Calu3 (cell line): ENCODE measurements at regions of chr3 and their contacts with region 1.

Region 1: GRCh38 chr3:11099306-11099705 is 55.0 kb upstream of the HRH1 start:
- DNase-seq: no peak
- H3K4me3 Mint-ChIP-seq: no peak overlapping the region
- H3K27ac Mint-ChIP-seq: no peak overlapping the region
- H3K4me1 Mint-ChIP-seq: peaks cover 7% of the 10 kb centered on the region
- H3K27me3 Mint-ChIP-seq: no peaks in the 10 kb centered on the region
- CTCF ChIP-seq: no peak

Region 2: DNA sequence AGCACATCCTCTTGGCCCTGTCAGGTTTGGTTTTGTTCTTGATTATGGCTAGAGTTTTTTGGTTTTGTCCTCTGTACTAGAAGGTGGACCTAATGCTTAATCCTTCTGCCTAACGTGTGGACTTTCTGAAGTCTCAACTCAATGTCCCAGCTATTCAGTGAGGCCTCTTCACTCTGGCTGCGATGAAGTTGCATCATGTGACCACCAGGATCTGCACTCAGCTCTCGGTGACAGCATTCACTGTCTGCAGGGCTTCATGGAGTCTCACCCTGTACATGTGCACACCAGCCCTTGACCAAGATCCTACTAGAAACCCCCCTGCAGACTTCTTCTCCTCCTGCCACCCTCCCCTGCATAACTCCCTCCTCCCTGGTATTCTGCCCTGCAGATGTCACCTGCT is 16.2 kb after region 1 on chr3:
- CTCF ChIA-PET with region 1: interaction called, 10 read pairs
- intact Hi-C with region 1: no loop called
- DNase-seq: no peak
- H3K4me3 Mint-ChIP-seq: no peak overlapping the region
- H3K27ac Mint-ChIP-seq: no peak overlapping the region
- H3K4me1 Mint-ChIP-seq: peaks cover 11% of the 10 kb centered on the region
- H3K27me3 Mint-ChIP-seq: peaks cover 51% of the 10 kb centered on the region
- CTCF ChIP-seq: no peak